B cell (primary cell): ENCODE measurements at regions of chr21 and their contacts with region 1.

Region 1: GRCh38 chr21:31580866-31581276 is 78.6 kb upstream of the SOD1 start:
- DNase-seq: peak; percentile 67
- ATAC-seq: peak; percentile 69
- H3K4me3 ChIP-seq: no peak overlapping the region
- H3K4me3 Mint-ChIP-seq: no peak overlapping the region
- H3K27ac ChIP-seq: no peak overlapping the region
- H3K27ac Mint-ChIP-seq: no peak overlapping the region
- H3K4me1 ChIP-seq: no peaks in the 10 kb centered on the region
- H3K4me1 Mint-ChIP-seq: no peaks in the 10 kb centered on the region
- H3K27me3 ChIP-seq: no peaks in the 10 kb centered on the region
- H3K27me3 Mint-ChIP-seq: peaks cover 13% of the 10 kb centered on the region
- CTCF ChIP-seq: peak; percentile 84

Region 2: GRCh38 chr21:31098576-31099005 is 482.3 kb before region 1 on chr21:
- CTCF ChIA-PET with region 1: interaction called, 38 read pairs
- POLR2A ChIA-PET with region 1: no interaction called
- intact Hi-C with region 1: no loop called
- DNase-seq: peak; percentile 69
- ATAC-seq: peak; percentile 69
- H3K4me3 ChIP-seq: no peak overlapping the region
- H3K4me3 Mint-ChIP-seq: no peak overlapping the region
- H3K27ac ChIP-seq: no peak overlapping the region
- H3K27ac Mint-ChIP-seq: no peak overlapping the region
- H3K4me1 ChIP-seq: peaks cover 3 to 4% of the 10 kb centered on the region in 2 donors
- H3K4me1 Mint-ChIP-seq: peaks cover 15% of the 10 kb centered on the region
- H3K27me3 ChIP-seq: peaks cover 0 to 4% (median 0%) of the 10 kb centered on the region in 4 experiments
- H3K27me3 Mint-ChIP-seq: peaks cover 13% of the 10 kb centered on the region
- CTCF ChIP-seq: peak; percentile 82

Region 3: GRCh38 chr21:31198575-31198974 is 382.3 kb before region 1 on chr21:
- CTCF ChIA-PET with region 1: interaction called, 112 read pairs
- POLR2A ChIA-PET with region 1: no interaction called
- intact Hi-C with region 1: loop called (anchors 1 kb)
- DNase-seq: peak; percentile 50
- ATAC-seq: no peak
- H3K4me3 ChIP-seq: no peak overlapping the region
- H3K4me3 Mint-ChIP-seq: no peak overlapping the region
- H3K27ac ChIP-seq: no peak overlapping the region
- H3K27ac Mint-ChIP-seq: no peak overlapping the region
- H3K4me1 ChIP-seq: peaks cover 5 to 7% of the 10 kb centered on the region in 2 donors
- H3K4me1 Mint-ChIP-seq: peaks cover 12% of the 10 kb centered on the region
- H3K27me3 ChIP-seq: no peaks in the 10 kb centered on the region
- H3K27me3 Mint-ChIP-seq: peaks cover 3% of the 10 kb centered on the region
- CTCF ChIP-seq: peak; percentile 71

Region 4: GRCh38 chr21:31213795-31214194 is 367.1 kb before region 1 on chr21:
- CTCF ChIA-PET with region 1: interaction called, 10 read pairs
- POLR2A ChIA-PET with region 1: no interaction called
- intact Hi-C with region 1: no loop called
- DNase-seq: no peak
- ATAC-seq: no peak
- H3K4me3 ChIP-seq: no peak overlapping the region
- H3K4me3 Mint-ChIP-seq: no peak overlapping the region
- H3K27ac ChIP-seq: no peak overlapping the region
- H3K27ac Mint-ChIP-seq: no peak overlapping the region
- H3K4me1 ChIP-seq: no peaks in the 10 kb centered on the region
- H3K4me1 Mint-ChIP-seq: no peaks in the 10 kb centered on the region
- H3K27me3 ChIP-seq: no peaks in the 10 kb centered on the region
- H3K27me3 Mint-ChIP-seq: no peaks in the 10 kb centered on the region
- CTCF ChIP-seq: no peak

Region 5: DNA sequence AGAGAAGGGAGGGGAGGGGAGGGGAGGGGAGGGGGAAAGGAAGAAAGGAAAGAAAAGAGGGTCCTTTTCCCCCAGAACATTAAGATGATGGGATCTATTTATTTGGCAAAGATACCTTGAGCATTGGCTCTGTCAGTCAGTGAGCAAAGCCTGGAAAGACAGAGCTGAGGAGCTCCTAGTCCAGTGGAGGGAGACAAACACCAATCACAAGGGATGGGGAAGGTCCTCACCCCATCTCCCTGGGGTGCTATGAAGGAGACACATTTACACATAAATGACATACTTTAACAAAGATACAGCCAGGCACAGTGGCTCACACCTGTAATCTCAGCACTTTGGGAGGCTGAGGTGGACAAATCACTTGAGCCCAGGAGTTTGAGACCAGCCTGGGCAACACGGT is 81.9 kb before region 1 on chr21:
- CTCF ChIA-PET with region 1: interaction called, 15 read pairs
- POLR2A ChIA-PET with region 1: no interaction called
- intact Hi-C with region 1: loop called (anchors 2 kb)
- DNase-seq: no peak
- ATAC-seq: peak; percentile 39
- H3K4me3 ChIP-seq: no peak overlapping the region
- H3K4me3 Mint-ChIP-seq: no peak overlapping the region
- H3K27ac ChIP-seq: no peak overlapping the region
- H3K27ac Mint-ChIP-seq: no peak overlapping the region
- H3K4me1 ChIP-seq: no peaks in the 10 kb centered on the region
- H3K4me1 Mint-ChIP-seq: no peaks in the 10 kb centered on the region
- H3K27me3 ChIP-seq: no peaks in the 10 kb centered on the region
- H3K27me3 Mint-ChIP-seq: no peaks in the 10 kb centered on the region
- CTCF ChIP-seq: no peak

Region 6: GRCh38 chr21:31558962-31559367 is 21.9 kb before region 1 on chr21:
- CTCF ChIA-PET with region 1: interaction called, 15 read pairs
- POLR2A ChIA-PET with region 1: no interaction called
- intact Hi-C with region 1: no loop called
- DNase-seq: peak; percentile 93
- ATAC-seq: peak; percentile 88
- H3K4me3 ChIP-seq: peak overlapping the region in 4 of 5 experiments; percentile 55 to 78 (median 59)
- H3K4me3 Mint-ChIP-seq: peak overlapping the region; percentile 95
- H3K27ac ChIP-seq: no peak overlapping the region
- H3K27ac Mint-ChIP-seq: no peak overlapping the region
- H3K4me1 ChIP-seq: peaks cover 20% of the 10 kb centered on the region in 2 donors
- H3K4me1 Mint-ChIP-seq: peaks cover 22% of the 10 kb centered on the region
- H3K27me3 ChIP-seq: peaks cover 0 to 24% (median 12%) of the 10 kb centered on the region in 4 experiments
- H3K27me3 Mint-ChIP-seq: peaks cover 26% of the 10 kb centered on the region
- CTCF ChIP-seq: peak; percentile 34

Region 7: GRCh38 chr21:31604591-31605190 is 23.8 kb after region 1 on chr21:
- CTCF ChIA-PET with region 1: interaction called, 6 read pairs
- POLR2A ChIA-PET with region 1: no interaction called
- intact Hi-C with region 1: loop called (anchors 1 kb)
- DNase-seq: peak; percentile 73
- ATAC-seq: peak; percentile 61
- H3K4me3 ChIP-seq: no peak overlapping the region
- H3K4me3 Mint-ChIP-seq: no peak overlapping the region
- H3K27ac ChIP-seq: no peak overlapping the region
- H3K27ac Mint-ChIP-seq: no peak overlapping the region
- H3K4me1 ChIP-seq: peaks cover 3% of the 10 kb centered on the region in 2 donors
- H3K4me1 Mint-ChIP-seq: peaks cover 2% of the 10 kb centered on the region
- H3K27me3 ChIP-seq: peaks cover 0 to 6% (median 0%) of the 10 kb centered on the region in 4 experiments
- H3K27me3 Mint-ChIP-seq: peaks cover 11% of the 10 kb centered on the region
- CTCF ChIP-seq: peak; percentile 92